ENCODE measurements at regions of chr10 and their contacts with region 1.

Region 1: GRCh38 chr10:32346134-32346550 is 816 bp downstream of the EPC1 start:
- DNase-seq: peak; percentile 96 to 98 (median 98)
- ATAC-seq: peak; percentile 98
- H3K4me3 ChIP-seq: peak overlapping the region; percentile 63
- H3K27ac ChIP-seq: peak overlapping the region; percentile 99
- H3K4me1 ChIP-seq: peaks cover 10% of the 10 kb centered on the region
- H3K27me3 ChIP-seq: no peaks in the 10 kb centered on the region

Region 2: GRCh38 chr10:32256613-32257437 is 89.3 kb before region 1 on chr10:
- intact Hi-C with region 1: loop called in 2 of 4 experiments (anchors 5 kb)
- DNase-seq: peak; percentile 45 to 88 (median 78)
- ATAC-seq: peak; percentile 67 to 68
- H3K4me3 ChIP-seq: no peak overlapping the region
- H3K27ac ChIP-seq: no peak overlapping the region
- H3K4me1 ChIP-seq: no peaks in the 10 kb centered on the region
- H3K27me3 ChIP-seq: no peaks in the 10 kb centered on the region

Region 3: GRCh38 chr10:32661341-32661740 is 315.2 kb after region 1 on chr10:
- intact Hi-C with region 1: no loop called
- DNase-seq: no peak
- ATAC-seq: no peak
- H3K4me3 ChIP-seq: no peak overlapping the region
- H3K27ac ChIP-seq: no peak overlapping the region
- H3K4me1 ChIP-seq: no peaks in the 10 kb centered on the region
- H3K27me3 ChIP-seq: no peaks in the 10 kb centered on the region